Left ventricle myocardium superior (tissue), 1 donor: ENCODE measurements at regions of chr5 and their contacts with region 1.

Region 1: GRCh38 chr5:134581241-134581981 is 51.2 kb downstream of the SAR1B start:
- DNase-seq: peak; percentile 72
- ATAC-seq: peak; percentile 80

Region 2: GRCh38 chr5:134304311-134304710 is 277.1 kb before region 1 on chr5:
- intact Hi-C with region 1: loop called (anchors 5 kb)
- DNase-seq: no peak
- ATAC-seq: no peak

Region 3: DNA sequence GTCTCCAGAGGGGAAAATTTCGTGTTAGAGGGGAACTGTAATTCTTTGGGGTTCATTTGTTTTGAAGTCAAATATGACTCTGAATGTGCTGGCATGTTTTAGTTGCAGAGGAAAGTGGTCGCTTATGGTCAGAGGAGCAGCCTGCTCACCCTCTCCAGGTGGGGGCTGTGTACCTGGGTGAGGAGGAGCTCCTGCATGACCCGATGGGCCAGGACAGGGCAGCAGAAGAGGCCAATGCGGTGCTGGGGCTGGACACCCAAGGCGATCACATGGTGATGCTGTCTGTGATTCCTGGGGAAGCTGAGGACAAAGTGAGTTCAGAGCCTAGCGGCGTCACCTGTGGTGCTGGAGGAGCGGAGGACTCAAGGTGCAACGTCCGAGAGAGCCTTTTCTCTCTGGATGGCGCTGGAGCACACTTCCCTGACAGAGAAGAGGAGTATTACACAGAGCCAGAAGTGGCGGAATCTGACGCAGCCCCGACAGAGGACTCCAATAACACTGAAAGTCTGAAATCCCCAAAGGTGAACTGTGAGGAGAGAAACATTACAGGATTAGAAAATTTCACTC is 306.3 kb after region 1 on chr5:
- intact Hi-C with region 1: no loop called
- DNase-seq: no peak
- ATAC-seq: no peak